GM10248 (cell line): ENCODE measurements at regions of chr13 and their contacts with region 1.

Region 1: DNA sequence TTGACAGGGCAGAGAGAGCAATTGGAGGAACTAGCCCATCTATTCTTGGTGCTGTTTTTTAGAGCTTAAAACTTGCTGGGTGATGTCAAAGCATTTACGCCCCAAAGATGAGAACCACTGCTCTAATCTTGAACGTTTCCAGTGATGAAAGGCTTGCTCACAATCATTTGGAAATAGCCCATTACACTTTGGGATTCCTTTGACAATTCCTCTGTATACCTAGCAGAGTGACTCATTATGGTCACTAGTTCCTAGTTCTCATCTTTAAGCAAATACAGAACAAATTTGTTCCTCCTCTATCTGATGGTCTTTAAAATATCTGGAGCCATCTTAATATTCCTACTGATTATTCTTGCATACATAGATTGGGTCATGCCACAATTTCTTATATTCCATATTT is 112.3 kb downstream of the GPC6 start:
- DNase-seq: no peak
- CTCF ChIP-seq: no peak

Region 2: GRCh38 chr13:93325980-93326850 is 12.7 kb before region 1 on chr13:
- CTCF ChIA-PET with region 1: interaction called, 14 read pairs
- POLR2A ChIA-PET with region 1: no interaction called
- DNase-seq: no peak
- CTCF ChIP-seq: no peak

Region 3: GRCh38 chr13:93356469-93356868 is 17.6 kb after region 1 on chr13:
- CTCF ChIA-PET with region 1: no interaction called
- POLR2A ChIA-PET with region 1: no interaction called
- DNase-seq: no peak
- CTCF ChIP-seq: no peak

Region 4: DNA sequence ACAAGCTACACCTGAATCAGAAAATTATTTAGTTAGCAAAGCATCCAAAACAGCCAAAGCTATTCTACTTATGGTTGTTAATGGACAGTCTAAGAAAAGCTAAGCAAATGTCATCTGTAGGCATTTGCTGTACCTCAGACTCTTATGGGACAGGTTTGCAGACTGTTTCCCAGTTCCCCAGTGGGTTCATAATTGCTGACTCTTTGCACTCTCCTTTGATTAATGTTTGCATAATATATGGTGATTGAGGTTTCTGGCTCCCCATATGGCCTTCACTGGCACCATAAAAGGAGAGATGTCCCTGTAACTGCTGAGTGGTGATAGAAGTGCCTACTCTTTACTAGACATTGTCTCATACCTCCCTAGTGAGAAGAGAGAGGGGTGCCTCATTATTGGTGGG is 29.8 kb after region 1 on chr13:
- CTCF ChIA-PET with region 1: no interaction called
- POLR2A ChIA-PET with region 1: no interaction called
- DNase-seq: no peak
- CTCF ChIP-seq: no peak